Thyroid gland (tissue), 4 donors: ENCODE measurements at regions of chr2 and their contacts with region 1.

Region 1: GRCh38 chr2:8671802-8672201 is 10.1 kb upstream of the ID2 start:
- DNase-seq: no peak
- H3K4me3 ChIP-seq: no peak overlapping the region
- H3K27ac ChIP-seq: no peak overlapping the region
- H3K4me1 ChIP-seq: peaks cover 8 to 10% of the 10 kb centered on the region in 2 donors
- H3K27me3 ChIP-seq: no peaks in the 10 kb centered on the region
- CTCF ChIP-seq: no peak
- POLR2A ChIP-seq: no peak

Region 2: DNA sequence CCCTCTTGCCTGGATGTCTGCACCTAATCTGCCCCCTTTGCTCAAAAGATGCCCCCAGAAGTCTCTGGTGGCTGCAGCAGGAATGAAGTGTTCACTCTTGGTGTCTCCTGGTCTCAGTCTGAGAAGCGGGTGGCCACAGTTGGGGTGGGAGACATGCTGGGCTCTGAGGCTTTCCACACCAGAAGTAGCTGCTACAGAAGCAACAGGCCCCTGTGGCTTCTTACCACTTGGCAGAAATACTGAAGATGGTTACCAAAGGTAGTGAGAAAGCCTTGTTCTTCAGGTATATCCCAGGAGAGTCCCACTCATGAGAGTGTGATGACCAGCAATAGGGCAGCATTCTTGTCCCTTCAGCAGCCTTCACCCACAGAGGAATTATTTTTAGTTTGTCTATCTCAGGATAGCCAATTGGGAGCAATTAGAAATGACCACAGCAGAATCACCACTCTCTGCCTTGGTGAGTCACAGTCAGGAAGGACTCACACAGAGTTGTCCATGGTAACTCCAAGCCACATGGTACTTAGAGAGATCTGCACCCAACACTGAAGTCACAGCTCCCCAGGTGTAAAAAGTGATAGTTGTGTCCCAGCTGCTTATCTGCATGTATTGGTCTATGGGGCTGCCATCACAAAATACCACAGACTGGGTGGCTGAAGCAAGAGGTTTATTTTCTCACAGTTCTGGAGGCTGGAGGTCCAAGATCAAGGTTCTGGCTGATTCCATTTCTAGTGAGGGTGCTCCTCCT is 159.8 kb before region 1 on chr2:
- intact Hi-C with region 1: no loop called
- DNase-seq: no peak
- H3K4me3 ChIP-seq: no peak overlapping the region
- H3K27ac ChIP-seq: no peak overlapping the region
- H3K4me1 ChIP-seq: peaks cover 0 to 7% of the 10 kb centered on the region in 2 donors
- H3K27me3 ChIP-seq: no peaks in the 10 kb centered on the region
- CTCF ChIP-seq: no peak
- POLR2A ChIP-seq: no peak

Region 3: DNA sequence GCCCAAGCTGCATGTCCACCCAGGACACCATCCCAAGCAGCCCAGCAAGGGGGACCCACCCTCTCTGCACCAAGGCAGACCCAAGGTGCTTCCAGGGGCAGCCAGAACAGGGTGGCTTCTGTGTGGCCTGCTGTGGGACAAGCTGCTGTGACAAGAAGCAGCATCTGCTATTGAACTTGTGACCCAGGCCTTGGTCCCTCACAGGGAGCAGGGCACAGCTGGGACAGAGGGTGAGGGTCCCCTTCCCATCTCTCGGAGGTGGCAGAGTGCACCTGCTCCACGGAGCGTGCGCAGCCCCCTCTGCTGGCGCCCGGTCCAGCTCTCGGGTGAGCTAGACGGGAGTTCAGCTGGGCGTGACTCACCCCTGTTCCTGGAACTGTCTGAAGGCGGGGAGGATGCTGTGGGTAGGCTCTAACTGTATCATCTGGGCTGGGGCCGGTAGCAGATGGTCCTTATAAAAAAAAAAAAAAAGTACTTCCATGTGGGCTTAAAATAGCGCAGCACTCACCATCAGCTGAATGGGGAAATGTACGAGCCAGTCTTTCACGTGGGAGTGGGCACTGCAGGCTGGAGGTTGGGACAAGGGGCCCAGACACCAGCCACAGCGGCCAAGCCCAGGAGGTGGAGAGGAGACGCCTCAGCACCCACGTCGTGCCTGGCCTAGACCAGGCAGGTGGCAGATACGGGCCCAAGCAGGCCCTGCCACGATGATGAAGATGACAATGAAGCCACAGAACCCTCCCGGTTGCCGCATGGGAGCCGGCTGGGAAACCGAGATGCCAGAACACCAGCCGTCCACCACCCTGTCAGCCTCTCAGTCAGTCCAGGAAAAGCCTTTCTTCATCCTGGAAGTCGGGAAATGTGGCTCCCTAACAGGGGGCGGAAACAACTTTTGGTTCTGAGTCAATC is 126.8 kb before region 1 on chr2:
- intact Hi-C with region 1: loop called (anchors 5 kb)
- DNase-seq: peak; percentile 19 to 33
- H3K4me3 ChIP-seq: no peak overlapping the region
- H3K27ac ChIP-seq: no peak overlapping the region
- H3K4me1 ChIP-seq: peaks cover 19 to 40% of the 10 kb centered on the region in 2 donors
- H3K27me3 ChIP-seq: no peaks in the 10 kb centered on the region
- CTCF ChIP-seq: peak in 1 of 6 experiments; percentile 11
- POLR2A ChIP-seq: no peak